ENCODE measurements at regions of chr7 and their contacts with region 1.

Region 1: DNA sequence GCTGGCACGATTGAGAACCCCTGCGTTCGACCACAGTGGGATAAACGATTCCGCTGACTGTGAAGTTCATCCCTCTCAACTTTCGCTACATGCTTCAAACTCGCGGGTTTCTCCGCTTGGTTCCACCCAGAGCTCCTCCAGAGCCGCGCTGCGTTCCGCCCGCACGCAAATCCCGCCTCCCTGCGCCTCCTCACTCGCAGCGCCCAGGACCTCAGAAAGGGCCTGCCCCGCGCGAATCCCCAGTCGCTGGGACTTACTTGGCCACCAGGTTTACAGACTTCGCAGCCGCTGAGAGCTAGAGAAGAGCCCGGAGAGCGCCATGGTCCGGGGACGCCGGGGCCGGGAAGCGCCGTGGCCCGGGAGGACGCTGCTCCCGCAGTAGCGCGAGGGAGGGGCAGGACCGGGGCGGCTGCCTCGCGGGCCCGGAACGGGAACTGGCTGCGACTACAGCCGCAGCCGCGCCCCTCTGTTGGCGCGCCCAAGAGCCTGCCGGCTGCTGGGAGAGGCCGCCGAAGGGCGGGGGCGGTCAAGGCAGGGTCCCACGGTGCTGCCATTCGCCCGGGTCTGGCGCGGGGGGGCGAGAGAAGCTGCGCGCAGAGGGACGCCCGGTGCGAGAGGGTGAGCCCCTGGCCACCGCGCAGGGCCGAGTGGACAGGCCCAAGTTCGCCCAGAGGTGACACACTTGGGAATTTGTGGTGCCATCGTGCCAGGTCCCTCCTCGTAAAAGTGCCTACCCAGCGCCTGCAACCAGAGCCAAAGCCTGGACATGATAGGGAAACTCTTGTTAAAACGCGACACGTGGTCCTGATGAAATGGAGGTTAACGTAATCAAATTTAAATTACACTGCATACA is at the start of gene NOD1:
- DNase-seq: peak; percentile 52 to 66
- ATAC-seq: peak; percentile 88 to 92
- H3K4me3 ChIP-seq: peak within 1 kb of the TSS; percentile 68 to 97 (median 86)
- H3K27ac ChIP-seq: peak within 1 kb of the TSS; percentile 78 to 95 (median 89)
- H3K4me1 ChIP-seq: peaks cover 23 to 40% of the 10 kb centered on the region in 2 donors
- H3K27me3 ChIP-seq: no peaks in the 10 kb centered on the region
- CTCF ChIP-seq: peak in 1 of 5 experiments; percentile 18
- POLR2A ChIP-seq: peak; percentile 25 to 48
- total RNA-seq, gene NOD1: 2.3 to 4.6 (median 3.6) TPM

Region 2: GRCh38 chr7:30504347-30505173 is 26.0 kb after region 1 on chr7 and contains the start of gene GGCT:
- in situ Hi-C with region 1: no loop called
- intact Hi-C with region 1: loop called (anchors 2 kb)
- DNase-seq: peak; percentile 100
- ATAC-seq: peak; percentile 99
- H3K4me3 ChIP-seq: peak within 1 kb of the TSS; percentile 89 to 99 (median 94)
- H3K27ac ChIP-seq: peak within 1 kb of the TSS; percentile 91 to 96 (median 94)
- H3K4me1 ChIP-seq: peaks cover 12 to 21% of the 10 kb centered on the region in 2 donors
- H3K27me3 ChIP-seq: no peaks in the 10 kb centered on the region
- CTCF ChIP-seq: peak in 1 of 5 experiments; percentile 11
- POLR2A ChIP-seq: peak; percentile 66 to 90
- total RNA-seq, gene GGCT: 7.4 to 20.0 (median 12.8) TPM

Region 3: GRCh38 chr7:30682212-30683083 is 203.9 kb after region 1 on chr7 and contains the start of gene CRHR2:
- in situ Hi-C with region 1: no loop called
- intact Hi-C with region 1: no loop called
- DNase-seq: no peak
- ATAC-seq: peak; percentile 62 to 64
- H3K4me3 ChIP-seq: peak within 1 kb of the TSS; percentile 56 to 70 (median 58)
- H3K27ac ChIP-seq: peak within 1 kb of the TSS in 2 of 4 donors; percentile 5 to 38
- H3K4me1 ChIP-seq: peaks cover 12 to 25% of the 10 kb centered on the region in 2 donors
- H3K27me3 ChIP-seq: peaks cover 6 to 19% (median 16%) of the 10 kb centered on the region in 3 donors
- CTCF ChIP-seq: peak; percentile 16 to 66 (median 54)
- POLR2A ChIP-seq: no peak
- total RNA-seq, gene CRHR2: 0.07 to 0.52 TPM in 2 of 4 donors, not detected in the others